Right cardiac atrium (tissue), 5 donors: ENCODE measurements at regions of chr20 and their contacts with region 1.

Region 1: DNA sequence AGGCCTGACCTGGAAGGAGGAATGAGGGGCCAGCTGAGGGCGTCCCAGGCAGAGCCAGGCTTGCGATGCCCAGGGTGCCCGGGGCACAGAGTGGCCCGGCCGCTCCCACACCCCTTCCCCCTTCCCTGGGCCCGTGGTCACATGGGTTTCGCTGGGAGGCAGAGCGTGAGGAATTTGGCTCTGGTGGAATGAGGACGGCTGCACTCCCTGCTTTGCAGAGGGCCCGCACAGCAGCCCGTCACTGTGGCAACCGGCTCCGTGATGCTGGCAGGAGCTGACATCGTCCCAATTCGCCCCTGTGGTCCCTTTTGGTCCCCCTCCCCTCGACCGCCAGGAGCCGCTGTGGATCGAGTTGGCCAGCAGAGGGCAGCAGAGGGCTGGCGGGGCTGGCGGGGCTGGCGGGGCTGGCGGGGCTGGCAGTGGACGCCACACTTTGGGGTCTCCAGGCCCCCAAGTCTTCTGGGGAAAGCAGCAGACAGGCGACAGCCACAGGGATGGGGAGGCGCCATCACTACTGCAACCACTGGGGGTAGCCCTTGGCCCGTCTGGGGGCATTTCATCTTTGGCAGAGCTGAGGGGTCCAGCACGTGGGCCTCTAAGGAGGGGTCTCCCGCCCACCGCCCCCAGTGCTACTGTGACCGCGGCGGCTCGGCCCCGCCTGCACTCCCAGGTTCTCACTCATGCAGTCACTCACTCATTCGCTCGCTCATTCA is 49.6 kb upstream of the BHLHE23 start:
- DNase-seq: peak; percentile 31 to 63 (median 62)
- ATAC-seq: peak; percentile 42 to 48
- H3K4me3 ChIP-seq: no peak overlapping the region
- H3K27ac ChIP-seq: no peak overlapping the region
- H3K4me1 ChIP-seq: no peaks in the 10 kb centered on the region
- H3K27me3 ChIP-seq: no peaks in the 10 kb centered on the region

Region 2: GRCh38 chr20:63178889-63179686 is 122.7 kb after region 1 on chr20:
- intact Hi-C with region 1: loop called (anchors 5 to 10 kb)
- DNase-seq: peak; percentile 29 to 75 (median 67)
- ATAC-seq: peak in 1 of 2 donors; percentile 16
- H3K4me3 ChIP-seq: peak overlapping the region; percentile 33
- H3K27ac ChIP-seq: no peak overlapping the region
- H3K4me1 ChIP-seq: no peaks in the 10 kb centered on the region
- H3K27me3 ChIP-seq: no peaks in the 10 kb centered on the region